ENCODE measurements at regions of chr4 and their contacts with region 1.

Region 1: GRCh38 chr4:17447675-17448298 is 64.1 kb downstream of the QDPR start:
- DNase-seq: peak; percentile 70
- ATAC-seq: peak; percentile 96
- H3K4me3 Mint-ChIP-seq: no peak overlapping the region
- H3K27ac Mint-ChIP-seq: no peak overlapping the region
- H3K4me1 Mint-ChIP-seq: peaks cover 4% of the 10 kb centered on the region
- H3K27me3 Mint-ChIP-seq: peaks cover 9% of the 10 kb centered on the region

Region 2: DNA sequence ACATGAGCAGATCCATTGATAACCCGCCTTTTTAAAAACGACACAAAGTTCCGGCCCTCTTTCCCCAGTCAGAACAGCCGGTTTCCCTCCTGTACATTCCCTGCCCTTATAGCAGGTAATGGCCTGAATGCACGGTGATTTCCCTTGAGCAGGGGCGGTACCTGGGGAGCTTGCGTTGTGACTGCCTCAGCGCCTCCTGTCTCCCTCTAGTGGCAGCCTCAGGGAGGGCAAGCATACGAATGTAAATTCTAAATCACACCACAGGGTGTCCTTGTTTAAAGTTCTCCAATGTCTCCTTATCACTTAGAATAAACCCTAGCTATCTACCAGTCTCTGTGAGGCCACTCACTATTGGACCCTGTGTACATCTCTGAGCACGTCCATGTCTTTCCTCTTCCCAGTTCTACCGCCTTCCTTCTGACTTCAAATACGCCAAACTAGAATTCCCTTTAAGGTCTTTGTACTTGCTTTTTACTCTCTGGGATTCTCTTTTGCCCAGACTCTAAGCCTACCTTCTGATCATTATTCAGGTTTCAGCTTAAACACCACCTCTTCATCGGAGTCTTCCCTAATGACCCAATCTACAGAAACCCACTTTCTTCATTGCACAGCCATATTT is 531.0 kb before region 1 on chr4:
- CTCF ChIA-PET with region 1: interaction called, 17 read pairs
- DNase-seq: peak; percentile 82
- ATAC-seq: peak; percentile 81
- H3K4me3 Mint-ChIP-seq: no peak overlapping the region
- H3K27ac Mint-ChIP-seq: no peak overlapping the region
- H3K4me1 Mint-ChIP-seq: peaks cover 7% of the 10 kb centered on the region
- H3K27me3 Mint-ChIP-seq: no peaks in the 10 kb centered on the region

Region 3: DNA sequence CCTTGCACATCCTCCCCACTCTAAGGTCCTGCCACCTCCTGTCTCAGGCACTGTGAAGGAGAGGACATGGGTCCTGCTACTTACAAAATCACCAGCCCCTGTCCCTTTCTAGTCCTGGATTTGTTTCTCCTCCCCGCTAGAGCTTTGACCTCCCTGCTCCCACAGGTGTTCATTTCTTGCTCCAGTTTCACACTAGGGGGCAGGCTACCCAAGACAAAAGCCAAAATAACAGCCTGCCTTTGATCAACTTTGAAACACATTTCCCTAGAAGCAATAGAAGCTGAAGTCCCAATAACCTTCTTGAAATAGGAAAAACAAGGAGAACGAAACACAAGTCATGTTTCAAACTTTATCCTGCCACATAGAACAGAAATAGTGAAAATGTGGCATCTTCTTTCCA is 100.3 kb before region 1 on chr4:
- CTCF ChIA-PET with region 1: interaction called, 32 read pairs
- DNase-seq: peak; percentile 42
- ATAC-seq: peak; percentile 39
- H3K4me3 Mint-ChIP-seq: no peak overlapping the region
- H3K27ac Mint-ChIP-seq: no peak overlapping the region
- H3K4me1 Mint-ChIP-seq: no peaks in the 10 kb centered on the region
- H3K27me3 Mint-ChIP-seq: no peaks in the 10 kb centered on the region

Region 4: GRCh38 chr4:17468371-17469221 is 20.8 kb after region 1 on chr4:
- CTCF ChIA-PET with region 1: interaction called, 19 read pairs
- DNase-seq: no peak
- ATAC-seq: no peak
- H3K4me3 Mint-ChIP-seq: no peak overlapping the region
- H3K27ac Mint-ChIP-seq: no peak overlapping the region
- H3K4me1 Mint-ChIP-seq: no peaks in the 10 kb centered on the region
- H3K27me3 Mint-ChIP-seq: no peaks in the 10 kb centered on the region

Region 5: DNA sequence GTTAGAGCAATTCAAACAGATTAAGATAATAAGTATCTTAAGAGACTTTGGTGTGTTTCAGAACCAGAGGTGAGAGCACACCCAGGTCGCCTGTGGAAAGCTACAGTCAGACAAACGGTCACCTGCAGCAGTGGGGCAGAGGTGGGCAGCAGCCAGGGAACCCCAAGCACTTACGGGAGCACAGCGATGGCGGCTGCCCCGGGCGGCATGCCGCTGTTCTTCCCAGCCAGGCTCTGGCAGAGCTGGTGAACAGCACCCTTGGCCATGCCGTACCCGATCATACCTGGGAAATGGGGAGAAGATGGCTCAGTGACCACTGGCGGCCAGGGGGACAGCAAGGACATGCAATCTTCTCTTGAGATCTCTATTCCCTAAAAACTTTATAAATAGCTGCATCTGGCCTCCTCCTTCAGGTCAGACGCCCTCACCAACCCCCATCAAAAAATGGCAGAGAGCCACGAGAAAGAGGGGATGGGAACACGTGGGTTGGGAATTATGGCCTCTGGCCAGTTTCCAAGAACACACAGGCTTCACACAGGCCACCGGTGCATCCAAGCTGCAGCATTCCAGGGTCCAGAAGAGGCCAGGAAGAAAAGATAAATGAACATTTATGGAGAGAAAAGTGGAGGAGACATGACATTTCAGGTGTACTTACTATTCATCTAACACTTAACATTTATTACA is 44.4 kb after region 1 on chr4:
- CTCF ChIA-PET with region 1: no interaction called
- DNase-seq: no peak
- ATAC-seq: no peak
- H3K4me3 Mint-ChIP-seq: no peak overlapping the region
- H3K27ac Mint-ChIP-seq: no peak overlapping the region
- H3K4me1 Mint-ChIP-seq: no peaks in the 10 kb centered on the region
- H3K27me3 Mint-ChIP-seq: no peaks in the 10 kb centered on the region

Region 6: DNA sequence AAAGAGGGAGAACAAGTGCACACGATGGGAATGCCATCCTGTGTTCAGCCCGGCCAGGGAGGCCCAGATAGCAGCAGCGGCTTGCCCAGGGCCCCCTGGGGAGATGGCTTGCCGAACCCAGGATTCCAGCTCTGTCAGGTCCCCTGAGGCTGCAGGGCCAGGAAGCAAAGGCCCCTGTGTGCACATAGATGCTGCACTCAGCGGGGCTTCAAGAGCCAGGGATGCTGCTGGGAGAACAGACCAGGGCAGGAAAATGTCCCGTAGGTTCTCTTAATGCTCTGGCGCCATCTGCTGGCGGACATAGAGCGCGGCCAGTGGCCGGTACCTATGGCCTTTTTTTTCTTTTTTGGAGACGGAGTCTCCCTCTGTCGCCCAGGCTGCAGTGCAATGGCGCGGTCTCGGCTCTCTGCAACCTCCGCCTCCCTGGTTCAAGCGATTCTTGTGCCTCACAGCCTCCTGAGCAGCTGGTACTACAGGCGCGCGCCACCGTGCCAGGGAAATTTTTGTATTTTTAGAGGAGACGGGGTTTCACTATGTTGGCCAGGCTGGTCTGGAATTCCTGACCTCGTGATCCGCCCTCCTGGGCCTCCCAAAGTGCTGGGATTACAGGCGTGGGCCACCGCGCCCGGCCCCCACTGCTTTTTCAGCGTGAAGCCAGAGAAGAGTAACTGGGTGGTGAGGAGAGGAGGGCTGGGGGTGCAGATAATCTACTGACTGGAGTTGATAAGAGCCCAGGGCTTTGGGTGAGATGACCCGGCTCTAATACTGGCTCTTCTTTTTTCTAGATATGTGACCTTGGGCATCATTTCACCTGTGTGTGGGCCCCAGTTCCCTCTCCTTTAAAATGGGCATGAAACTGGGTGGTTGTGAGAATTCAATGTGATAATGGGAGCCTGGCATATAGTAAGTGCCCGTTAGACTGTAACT is 189.2 kb after region 1 on chr4:
- CTCF ChIA-PET with region 1: no interaction called
- DNase-seq: peak; percentile 79
- ATAC-seq: peak; percentile 96
- H3K4me3 Mint-ChIP-seq: no peak overlapping the region
- H3K27ac Mint-ChIP-seq: no peak overlapping the region
- H3K4me1 Mint-ChIP-seq: peaks cover 2% of the 10 kb centered on the region
- H3K27me3 Mint-ChIP-seq: no peaks in the 10 kb centered on the region